ENCODE measurements at regions of chr21 and their contacts with region 1.

Region 1: DNA sequence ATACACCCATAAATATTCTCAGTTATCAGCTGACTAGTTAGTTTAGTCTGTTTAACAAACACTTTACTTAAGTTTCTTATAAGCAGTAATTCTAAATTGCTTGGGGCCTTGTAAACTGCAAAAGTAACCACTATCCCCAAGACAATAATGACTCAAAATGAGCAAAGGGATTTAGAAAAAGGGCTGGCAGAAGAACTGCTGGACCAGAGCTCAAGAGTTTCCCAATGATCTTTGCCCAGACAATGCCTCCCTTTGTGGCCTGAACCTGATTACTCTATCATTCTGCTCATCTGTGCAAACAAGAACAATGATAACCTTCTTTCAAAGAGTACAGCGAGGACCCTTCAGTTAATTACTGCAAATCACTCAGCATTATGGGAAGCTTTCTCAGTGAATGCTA is 123.5 kb downstream of the TIAM1 start:
- DNase-seq: peak; percentile 57
- ATAC-seq: peak; percentile 71
- H3K4me3 ChIP-seq: no peak overlapping the region
- H3K27ac ChIP-seq: no peak overlapping the region
- H3K4me1 ChIP-seq: peaks cover 15% of the 10 kb centered on the region
- H3K27me3 ChIP-seq: no peaks in the 10 kb centered on the region
- CTCF ChIP-seq: no peak
- EP300 ChIP-seq: no peak
- POLR2A ChIP-seq: no peak
- RAD21 ChIP-seq: no peak

Region 2: GRCh38 chr21:31282095-31282709 is 61.6 kb after region 1 on chr21:
- CTCF ChIA-PET with region 1: no interaction called
- POLR2A ChIA-PET with region 1: no interaction called
- in situ Hi-C with region 1: no loop called
- intact Hi-C with region 1: loop called (anchors 5 kb)
- DNase-seq: no peak
- ATAC-seq: no peak
- H3K4me3 ChIP-seq: no peak overlapping the region
- H3K27ac ChIP-seq: no peak overlapping the region
- H3K4me1 ChIP-seq: no peaks in the 10 kb centered on the region
- H3K27me3 ChIP-seq: no peaks in the 10 kb centered on the region
- CTCF ChIP-seq: no peak
- EP300 ChIP-seq: no peak
- POLR2A ChIP-seq: no peak
- RAD21 ChIP-seq: no peak

Measured in HepG2 (cell line).